ENCODE measurements at regions of chr9 and their contacts with region 1.

Region 1: GRCh38 chr9:133149126-133150107 is 14.3 kb downstream of the GBGT1 start:
- DNase-seq: peak; percentile 94
- H3K4me3 Mint-ChIP-seq: peak overlapping the region; percentile 78
- H3K27ac Mint-ChIP-seq: peak overlapping the region; percentile 82
- H3K4me1 Mint-ChIP-seq: peaks cover 29% of the 10 kb centered on the region
- H3K27me3 Mint-ChIP-seq: no peaks in the 10 kb centered on the region

Region 2: GRCh38 chr9:132572921-132573320 is 576.5 kb before region 1 on chr9:
- intact Hi-C with region 1: no loop called
- DNase-seq: no peak
- H3K4me3 Mint-ChIP-seq: no peak overlapping the region
- H3K27ac Mint-ChIP-seq: no peak overlapping the region
- H3K4me1 Mint-ChIP-seq: no peaks in the 10 kb centered on the region
- H3K27me3 Mint-ChIP-seq: peaks cover 28% of the 10 kb centered on the region

Region 3: GRCh38 chr9:132877824-132878694 is 271.4 kb before region 1 on chr9 and contains the start of gene AK8:
- intact Hi-C with region 1: loop called (anchors 10 kb)
- DNase-seq: peak; percentile 95
- H3K4me3 Mint-ChIP-seq: peak within 1 kb of the TSS; percentile 81
- H3K27ac Mint-ChIP-seq: peak within 1 kb of the TSS; percentile 66
- H3K4me1 Mint-ChIP-seq: peaks cover 28% of the 10 kb centered on the region
- H3K27me3 Mint-ChIP-seq: peaks cover 5% of the 10 kb centered on the region
- total RNA-seq, gene AK8: 0.33 TPM in 1 of 2 replicates, not detected in the other

Region 4: GRCh38 chr9:133030317-133031129 is 118.9 kb before region 1 on chr9 and contains the start of gene GTF3C5:
- intact Hi-C with region 1: loop called (anchors 2 kb)
- DNase-seq: peak; percentile 98
- H3K4me3 Mint-ChIP-seq: peak within 1 kb of the TSS; percentile 91
- H3K27ac Mint-ChIP-seq: peak within 1 kb of the TSS; percentile 95
- H3K4me1 Mint-ChIP-seq: peaks cover 32% of the 10 kb centered on the region
- H3K27me3 Mint-ChIP-seq: no peaks in the 10 kb centered on the region
- total RNA-seq, gene GTF3C5: 85.4 and 92.3 TPM in 2 replicates

Region 5: DNA sequence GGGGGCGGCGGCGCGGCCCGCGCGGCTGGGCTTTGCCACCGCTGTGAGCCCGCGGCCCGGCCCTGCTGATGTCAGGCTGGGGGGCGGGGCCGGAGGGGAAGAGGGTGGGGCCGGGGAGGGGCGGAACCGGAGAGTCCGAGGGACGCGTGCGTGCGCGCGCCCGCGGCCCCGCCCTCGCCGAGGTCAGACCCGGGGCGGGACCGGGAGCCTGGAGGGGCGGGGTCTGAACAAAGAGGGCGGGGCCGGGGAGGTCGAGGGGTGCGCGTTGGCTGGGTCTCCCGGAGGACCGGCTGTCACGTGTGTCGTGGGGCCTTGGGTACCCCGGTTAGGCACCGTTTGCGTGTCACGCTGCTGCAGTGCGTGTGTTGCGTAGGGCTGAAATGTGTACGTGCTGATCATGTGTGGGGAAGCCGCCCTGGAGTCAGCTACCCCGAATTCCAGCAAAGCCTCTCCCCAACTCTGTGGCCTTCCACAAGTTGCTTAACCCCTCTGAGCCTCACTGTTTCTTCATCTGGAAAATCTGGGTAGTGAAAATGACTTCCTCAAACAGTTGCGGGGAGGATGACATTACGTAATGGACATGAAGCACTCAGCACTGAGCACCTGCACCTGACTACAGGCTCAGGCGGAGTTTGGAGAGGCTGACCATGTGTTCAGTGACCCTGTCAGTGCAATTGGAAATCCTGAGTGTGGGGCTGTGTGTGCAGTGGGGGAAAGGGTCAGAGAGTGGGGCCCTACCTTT is 28.0 kb before region 1 on chr9 and contains the start of gene RALGDS:
- intact Hi-C with region 1: loop called (anchors 1 kb)
- DNase-seq: peak; percentile 96
- H3K4me3 Mint-ChIP-seq: peak within 1 kb of the TSS; percentile 84
- H3K27ac Mint-ChIP-seq: peak within 1 kb of the TSS; percentile 93
- H3K4me1 Mint-ChIP-seq: peaks cover 58% of the 10 kb centered on the region
- H3K27me3 Mint-ChIP-seq: no peaks in the 10 kb centered on the region
- total RNA-seq, gene RALGDS: 93.0 and 96.7 TPM in 2 replicates